Left ventricle myocardium superior (tissue), 1 donor: ENCODE measurements at regions of chr4 and their contacts with region 1.

Region 1: DNA sequence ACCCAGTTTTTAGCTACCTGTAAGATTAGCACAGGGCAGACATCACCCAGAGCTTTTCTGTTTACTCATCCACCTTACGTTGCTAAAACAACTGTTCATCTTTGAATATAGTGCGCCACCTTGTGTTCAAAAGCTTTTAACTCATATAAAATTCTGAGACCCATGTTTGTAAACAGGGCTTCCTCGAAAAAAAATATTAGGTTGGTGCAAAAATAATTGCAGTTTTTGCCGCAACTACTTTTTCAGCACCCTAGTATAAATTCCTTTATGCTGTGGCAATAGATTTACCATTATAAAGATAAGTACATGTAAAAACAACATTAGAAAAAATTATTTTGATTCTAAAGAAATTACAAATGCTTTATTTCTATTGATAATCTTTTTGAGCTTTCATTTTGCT is 147.9 kb downstream of the LRBA start:
- DNase-seq: no peak
- ATAC-seq: peak; percentile 67

Region 2: GRCh38 chr4:149961876-149962597 is 905.1 kb before region 1 on chr4:
- intact Hi-C with region 1: no loop called
- DNase-seq: no peak
- ATAC-seq: no peak

Region 3: GRCh38 chr4:149999485-150000074 is 867.6 kb before region 1 on chr4:
- intact Hi-C with region 1: loop called (anchors 10 kb)
- DNase-seq: no peak
- ATAC-seq: peak; percentile 74

Region 4: GRCh38 chr4:150098214-150098613 is 768.9 kb before region 1 on chr4:
- intact Hi-C with region 1: no loop called
- DNase-seq: no peak
- ATAC-seq: peak; percentile 32

Region 5: GRCh38 chr4:150297861-150298474 is 569.2 kb before region 1 on chr4:
- intact Hi-C with region 1: loop called (anchors 5 kb)
- DNase-seq: no peak
- ATAC-seq: no peak

Region 6: DNA sequence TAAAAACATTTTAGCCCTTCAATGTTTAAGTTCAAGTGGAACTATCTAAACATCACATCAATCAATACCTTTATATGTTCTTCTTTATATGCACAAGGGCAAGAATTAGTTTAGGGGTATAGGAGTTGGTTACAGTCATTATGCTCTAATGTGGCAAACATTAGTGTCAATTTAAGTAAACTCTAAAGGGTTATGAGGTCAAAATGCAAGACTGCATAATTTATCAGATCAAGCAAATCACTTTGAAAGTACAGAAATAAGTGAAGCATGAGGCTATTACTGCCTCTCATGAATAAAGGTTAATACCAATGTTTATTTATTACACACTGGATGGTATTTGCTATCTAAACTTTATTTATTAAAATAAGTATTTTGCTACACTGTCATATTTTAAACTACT is 225.5 kb before region 1 on chr4:
- intact Hi-C with region 1: no loop called
- DNase-seq: no peak
- ATAC-seq: no peak

Region 7: DNA sequence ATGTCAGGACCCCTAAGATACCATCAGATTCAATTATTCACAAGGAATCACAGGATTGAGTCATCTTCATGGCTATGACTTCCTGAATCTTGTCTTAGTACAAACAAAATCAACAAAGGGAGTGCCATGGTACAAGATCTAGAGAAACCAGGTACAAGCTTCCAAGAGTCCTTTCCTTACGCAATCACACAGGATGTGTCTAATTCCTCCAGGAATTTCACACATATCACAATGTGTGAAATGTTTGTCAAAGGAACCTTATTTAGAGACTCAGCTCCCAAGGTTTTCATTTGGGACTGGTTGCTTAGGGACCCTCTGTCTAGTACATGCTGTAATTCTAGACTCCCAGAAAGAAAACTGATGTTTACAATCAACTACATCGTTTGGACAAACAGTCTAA is 202.2 kb before region 1 on chr4:
- intact Hi-C with region 1: no loop called
- DNase-seq: no peak
- ATAC-seq: no peak